ENCODE measurements at regions of chr1 and their contacts with region 1.

Region 1: DNA sequence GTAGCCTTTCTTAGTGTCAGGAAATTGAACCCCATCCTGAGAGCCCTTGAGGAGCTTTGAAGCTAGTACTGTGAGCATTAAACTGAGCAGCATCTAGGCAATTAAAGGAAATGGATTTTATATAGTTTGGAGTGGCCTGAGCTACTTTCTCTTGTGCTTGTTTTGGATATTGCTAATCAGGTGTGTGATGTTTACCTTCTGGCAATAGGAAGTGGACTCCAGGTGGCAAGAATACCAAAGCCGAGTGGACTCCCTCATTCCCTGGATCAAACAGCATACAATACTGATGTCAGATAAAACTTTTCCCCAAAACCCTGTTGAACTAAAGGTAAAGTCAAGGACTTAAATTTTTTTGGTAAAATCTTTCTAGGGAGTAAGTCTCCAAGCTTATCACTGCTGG is 79.4 kb downstream of the MACF1 start:
- DNase-seq: no peak
- ATAC-seq: no peak
- H3K4me3 ChIP-seq: no peak overlapping the region
- H3K27ac ChIP-seq: no peak overlapping the region
- H3K4me1 ChIP-seq: no peaks in the 10 kb centered on the region
- H3K27me3 ChIP-seq: no peaks in the 10 kb centered on the region
- CTCF ChIP-seq: no peak
- EP300 ChIP-seq: no peak
- POLR2A ChIP-seq: no peak
- RAD21 ChIP-seq: no peak

Region 2: DNA sequence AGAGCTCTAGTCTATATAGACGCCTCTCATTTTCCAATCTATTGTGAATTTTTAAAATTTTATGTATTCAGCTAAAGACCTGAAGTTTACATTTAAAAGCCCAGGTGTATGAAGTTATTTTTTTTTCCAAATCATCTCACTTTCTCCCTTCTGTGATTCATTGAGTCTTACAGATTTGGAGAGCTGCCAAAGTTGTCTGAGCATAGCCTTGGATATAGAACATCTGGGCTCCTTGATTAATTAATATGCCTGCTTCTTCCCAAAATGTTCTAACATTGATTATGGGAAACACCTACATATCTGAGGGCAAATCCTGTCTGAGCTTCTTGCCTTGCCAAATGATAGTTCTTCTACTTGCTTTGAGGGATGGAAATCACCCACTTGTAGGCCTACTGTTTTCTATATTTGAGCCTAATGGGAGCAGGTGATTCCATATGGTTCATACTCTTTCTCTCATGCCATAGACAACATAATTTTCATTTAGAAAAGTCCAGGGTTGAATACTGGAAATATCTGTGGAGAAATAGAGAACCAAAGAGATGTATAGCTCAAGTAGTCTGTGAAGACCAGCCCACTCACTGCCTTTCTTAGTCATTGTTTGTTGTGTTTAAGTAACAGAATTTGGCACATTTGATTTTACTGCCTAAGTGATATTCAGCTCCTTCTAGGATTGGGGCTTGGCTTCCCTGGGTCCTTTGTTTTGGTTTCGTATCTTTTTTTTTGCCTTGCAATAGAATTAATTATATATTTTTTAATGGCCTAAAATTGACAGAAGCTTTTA is 33.2 kb before region 1 on chr1:
- CTCF ChIA-PET with region 1: no interaction called
- POLR2A ChIA-PET with region 1: no interaction called
- RAD21 ChIA-PET with region 1: no interaction called
- SMC1A ChIA-PET with region 1: no interaction called
- in situ Hi-C with region 1: no loop called
- intact Hi-C with region 1: no loop called
- DNase-seq: no peak
- ATAC-seq: no peak
- H3K4me3 ChIP-seq: no peak overlapping the region
- H3K27ac ChIP-seq: no peak overlapping the region
- H3K4me1 ChIP-seq: peaks cover 2% of the 10 kb centered on the region; the same call in 1 of the 2 replicates
- H3K27me3 ChIP-seq: no peaks in the 10 kb centered on the region
- CTCF ChIP-seq: no peak
- EP300 ChIP-seq: no peak
- POLR2A ChIP-seq: no peak
- RAD21 ChIP-seq: no peak

Region 3: DNA sequence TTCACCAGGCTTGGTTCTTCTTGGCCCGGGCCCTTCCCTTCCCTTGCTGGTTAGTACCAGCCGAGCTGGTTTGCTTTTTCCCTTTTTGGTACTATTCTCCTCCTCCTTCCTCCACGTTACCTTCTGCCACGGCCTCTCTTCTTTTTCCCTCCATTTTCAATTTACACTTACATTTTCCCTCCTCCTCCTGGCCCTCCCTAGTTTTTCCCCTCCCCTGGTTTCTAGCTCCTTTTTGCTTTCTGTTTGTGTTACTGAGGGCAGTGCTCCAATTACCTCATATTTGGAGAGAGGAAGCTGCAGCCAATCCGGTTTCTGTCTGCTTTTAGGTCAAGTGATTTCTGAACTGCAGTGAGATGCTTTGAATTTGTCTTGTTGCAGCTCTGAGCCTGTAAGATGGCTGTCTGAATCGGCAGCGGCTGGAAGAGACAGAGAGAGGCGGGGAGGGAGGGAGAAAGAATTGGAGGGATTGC is 15.7 kb before region 1 on chr1:
- CTCF ChIA-PET with region 1: interaction called, 7 read pairs
- POLR2A ChIA-PET with region 1: interaction called, 5 read pairs
- RAD21 ChIA-PET with region 1: interaction called, 4 read pairs
- SMC1A ChIA-PET with region 1: interaction called, 27 read pairs
- in situ Hi-C with region 1: no loop called
- intact Hi-C with region 1: no loop called
- DNase-seq: no peak
- ATAC-seq: peak; percentile 29
- H3K4me3 ChIP-seq: peak overlapping the region; percentile 57; the same call in 1 of the 2 replicates
- H3K27ac ChIP-seq: peak overlapping the region; percentile 81
- H3K4me1 ChIP-seq: peaks cover 57% of the 10 kb centered on the region
- H3K27me3 ChIP-seq: no peaks in the 10 kb centered on the region
- CTCF ChIP-seq: no peak
- EP300 ChIP-seq: no peak
- POLR2A ChIP-seq: peak; percentile 38; the same call in 1 of the 2 replicates
- RAD21 ChIP-seq: no peak

Region 4: GRCh38 chr1:39632682-39633417 is 349.0 kb after region 1 on chr1:
- CTCF ChIA-PET with region 1: no interaction called
- POLR2A ChIA-PET with region 1: no interaction called
- RAD21 ChIA-PET with region 1: no interaction called
- SMC1A ChIA-PET with region 1: no interaction called
- in situ Hi-C with region 1: no loop called
- intact Hi-C with region 1: no loop called
- DNase-seq: no peak
- ATAC-seq: no peak
- H3K4me3 ChIP-seq: no peak overlapping the region
- H3K27ac ChIP-seq: no peak overlapping the region
- H3K4me1 ChIP-seq: peaks cover 3% of the 10 kb centered on the region; the same call in 1 of the 2 replicates
- H3K27me3 ChIP-seq: peaks cover 0 to 4% of the 10 kb centered on the region in 2 experiments; a peak in 3 of 4 replicates
- CTCF ChIP-seq: no peak
- EP300 ChIP-seq: no peak
- POLR2A ChIP-seq: no peak
- RAD21 ChIP-seq: no peak